Naive thymus-derived CD4-positive, alpha-beta T cell (primary cell): ENCODE measurements at regions of chr11 and their contacts with region 1.

Region 1: DNA sequence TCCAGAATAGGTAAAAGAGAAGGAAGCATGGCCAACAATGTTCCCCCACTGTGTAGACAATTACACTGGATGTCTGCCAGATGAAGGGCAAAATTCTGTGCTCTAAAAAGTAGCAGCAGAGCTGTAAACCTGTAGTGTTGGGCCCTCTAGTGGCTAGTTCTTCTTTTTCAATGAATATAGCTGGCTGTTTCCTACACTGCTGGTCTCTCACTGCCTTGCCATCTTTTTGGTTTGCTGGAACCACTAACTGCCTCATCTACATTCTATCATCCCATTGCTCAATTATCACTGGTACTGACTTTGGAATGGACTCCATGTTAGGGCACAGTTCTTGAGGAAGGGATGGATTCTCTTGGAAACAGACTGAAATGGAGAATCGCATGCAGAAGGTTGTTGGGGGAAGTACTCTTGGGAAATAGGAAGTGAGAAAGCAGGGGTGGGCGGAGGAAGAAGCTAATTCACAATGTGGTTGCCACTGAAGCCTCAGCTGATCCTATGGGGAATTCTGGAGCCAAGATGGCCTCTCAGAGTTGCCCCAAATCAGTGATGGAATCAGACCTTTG is 17.9 kb downstream of the KCNE3 start:
- DNase-seq: peak in 7 of 9 donors; percentile 56 to 77 (median 67)
- ATAC-seq: peak; percentile 92
- H3K4me3 ChIP-seq: no peak overlapping the region
- H3K4me3 Mint-ChIP-seq: no peak overlapping the region
- H3K27ac ChIP-seq: no peak overlapping the region
- H3K27ac Mint-ChIP-seq: peak overlapping the region in 1 of 9 donors; percentile 56
- H3K4me1 ChIP-seq: no peaks in the 10 kb centered on the region
- H3K4me1 Mint-ChIP-seq: peaks cover 0 to 6% (median 5%) of the 10 kb centered on the region in 7 donors
- H3K27me3 ChIP-seq: no peaks in the 10 kb centered on the region
- H3K27me3 Mint-ChIP-seq: peaks cover 0 to 10% (median 7%) of the 10 kb centered on the region in 5 donors

Region 2: GRCh38 chr11:74255741-74256369 is 193.6 kb before region 1 on chr11:
- CTCF ChIA-PET with region 1: interaction called, 30 read pairs
- POLR2A ChIA-PET with region 1: no interaction called
- intact Hi-C with region 1: loop called in 1 of 2 experiments (anchors 1 kb)
- DNase-seq: peak in 8 of 9 donors; percentile 21 to 72 (median 62)
- ATAC-seq: peak; percentile 90
- H3K4me3 ChIP-seq: no peak overlapping the region
- H3K4me3 Mint-ChIP-seq: no peak overlapping the region
- H3K27ac ChIP-seq: no peak overlapping the region
- H3K27ac Mint-ChIP-seq: peak overlapping the region in 5 of 9 donors; percentile 4 to 68 (median 12)
- H3K4me1 ChIP-seq: peaks cover 0 to 6% of the 10 kb centered on the region in 2 donors
- H3K4me1 Mint-ChIP-seq: peaks cover 0 to 12% (median 5%) of the 10 kb centered on the region in 7 donors
- H3K27me3 ChIP-seq: no peaks in the 10 kb centered on the region
- H3K27me3 Mint-ChIP-seq: no peaks in the 10 kb centered on the region

Region 3: DNA sequence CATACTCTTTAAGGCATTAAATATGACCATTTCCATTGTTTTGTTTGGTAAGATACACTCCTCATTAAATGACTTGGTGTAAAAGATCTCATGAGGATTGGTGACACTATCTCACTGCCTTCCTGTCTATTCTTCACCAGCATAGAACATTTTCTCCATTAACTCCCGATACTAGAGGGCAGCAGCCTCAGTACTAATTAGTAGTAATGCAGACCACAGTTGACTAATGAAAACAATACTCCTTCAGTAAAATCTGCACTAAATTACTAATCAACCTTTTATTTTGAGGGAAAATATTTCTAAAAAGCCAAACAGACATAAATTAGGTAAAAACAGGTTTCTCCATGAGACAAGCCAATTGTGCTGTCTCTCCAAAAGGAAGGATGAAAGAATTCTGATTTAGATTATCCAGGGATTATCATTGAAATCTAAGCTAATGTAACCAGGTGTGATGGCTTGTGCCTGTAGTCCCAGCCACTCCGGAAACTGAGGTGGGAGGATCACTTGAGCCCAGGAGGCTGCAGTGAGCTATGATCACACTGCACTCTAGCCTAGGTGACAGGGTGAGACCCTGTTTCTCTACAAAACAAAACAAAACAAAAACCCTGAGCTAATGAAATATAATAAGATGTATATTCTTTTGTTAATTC is 60.6 kb before region 1 on chr11:
- CTCF ChIA-PET with region 1: interaction called, 159 read pairs
- POLR2A ChIA-PET with region 1: interaction called, 5 read pairs
- intact Hi-C with region 1: loop called (anchors 1 kb)
- DNase-seq: peak in 8 of 9 donors; percentile 34 to 74 (median 64)
- ATAC-seq: peak; percentile 93
- H3K4me3 ChIP-seq: no peak overlapping the region
- H3K4me3 Mint-ChIP-seq: no peak overlapping the region
- H3K27ac ChIP-seq: no peak overlapping the region
- H3K27ac Mint-ChIP-seq: peak overlapping the region in 3 of 9 donors; percentile 10 to 82 (median 79)
- H3K4me1 ChIP-seq: peaks cover 0 to 3% of the 10 kb centered on the region in 2 donors
- H3K4me1 Mint-ChIP-seq: peaks cover 19 to 39% (median 33%) of the 10 kb centered on the region in 7 donors
- H3K27me3 ChIP-seq: no peaks in the 10 kb centered on the region
- H3K27me3 Mint-ChIP-seq: no peaks in the 10 kb centered on the region

Region 4: DNA sequence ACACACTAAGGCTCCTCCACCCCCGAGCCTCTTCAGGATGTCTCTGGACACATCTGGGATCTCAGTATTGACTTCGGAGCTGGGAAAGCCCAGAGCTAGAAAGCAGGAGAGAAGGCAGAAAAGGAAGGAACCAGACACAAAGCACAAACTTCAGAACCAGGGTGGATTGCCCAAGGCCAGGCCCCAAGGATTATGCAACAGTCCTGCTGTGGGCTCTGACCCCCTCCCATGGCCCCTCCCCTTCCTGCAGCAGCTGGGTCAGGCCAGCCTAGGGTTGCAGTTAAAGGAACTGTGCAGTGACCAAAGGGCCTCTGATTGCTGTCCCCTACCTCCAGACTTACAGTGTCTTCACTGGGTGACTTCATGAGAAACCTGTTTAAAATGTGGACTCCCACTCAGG is 12.6 kb after region 1 on chr11:
- CTCF ChIA-PET with region 1: interaction called, 15 read pairs
- POLR2A ChIA-PET with region 1: no interaction called
- intact Hi-C with region 1: no loop called
- DNase-seq: no peak
- ATAC-seq: peak; percentile 81
- H3K4me3 ChIP-seq: no peak overlapping the region
- H3K4me3 Mint-ChIP-seq: no peak overlapping the region
- H3K27ac ChIP-seq: no peak overlapping the region
- H3K27ac Mint-ChIP-seq: no peak overlapping the region
- H3K4me1 ChIP-seq: no peaks in the 10 kb centered on the region
- H3K4me1 Mint-ChIP-seq: peaks cover 0 to 10% (median 7%) of the 10 kb centered on the region in 7 donors
- H3K27me3 ChIP-seq: peaks cover 0 to 6% of the 10 kb centered on the region in 2 donors
- H3K27me3 Mint-ChIP-seq: peaks cover 25 to 30% (median 28%) of the 10 kb centered on the region in 5 donors

Region 5: DNA sequence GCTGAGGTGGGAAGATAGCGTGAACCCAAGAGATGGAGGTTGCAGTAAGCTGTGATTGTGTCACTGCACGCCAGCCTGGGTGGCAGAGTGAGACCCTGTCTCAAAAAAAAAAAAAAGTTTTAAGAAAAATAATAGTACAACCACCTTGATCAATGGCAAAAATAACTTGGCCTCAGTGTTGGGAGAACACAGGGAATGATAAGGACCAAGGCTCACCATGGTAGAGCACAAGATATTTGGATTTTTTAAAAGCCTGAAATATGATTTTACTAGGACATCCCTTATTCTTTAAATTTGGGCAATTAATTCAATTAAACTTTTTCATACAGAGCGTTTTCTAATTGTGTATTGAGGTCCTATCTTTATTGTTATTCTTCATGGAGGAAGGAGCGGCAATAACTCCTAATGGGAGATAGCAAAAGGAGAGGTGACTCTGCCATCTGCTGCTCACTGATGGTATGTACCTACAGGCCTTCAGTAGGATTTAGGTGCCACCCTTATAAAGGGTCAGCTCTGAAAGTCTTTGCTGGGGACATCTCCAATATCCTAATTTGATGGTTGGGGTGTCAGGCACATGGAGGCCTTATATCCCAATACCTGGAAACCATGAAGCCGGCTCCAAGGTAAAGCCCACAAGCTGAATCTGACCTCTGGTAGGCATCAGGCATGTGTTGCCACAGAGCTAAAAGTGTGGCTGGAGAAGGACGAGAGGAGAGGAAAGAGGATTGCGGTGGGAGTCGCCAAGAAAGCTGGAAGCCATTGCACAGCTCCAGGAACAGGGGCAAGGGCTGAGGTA is 121.0 kb after region 1 on chr11:
- CTCF ChIA-PET with region 1: interaction called, 63 read pairs
- POLR2A ChIA-PET with region 1: no interaction called
- intact Hi-C with region 1: loop called (anchors 1 kb)
- DNase-seq: peak in 3 of 9 donors; percentile 13 to 16 (median 15)
- ATAC-seq: peak; percentile 65
- H3K4me3 ChIP-seq: no peak overlapping the region
- H3K4me3 Mint-ChIP-seq: no peak overlapping the region
- H3K27ac ChIP-seq: no peak overlapping the region
- H3K27ac Mint-ChIP-seq: no peak overlapping the region
- H3K4me1 ChIP-seq: no peaks in the 10 kb centered on the region
- H3K4me1 Mint-ChIP-seq: no peaks in the 10 kb centered on the region
- H3K27me3 ChIP-seq: no peaks in the 10 kb centered on the region
- H3K27me3 Mint-ChIP-seq: peaks cover 0 to 14% (median 0%) of the 10 kb centered on the region in 5 donors

Region 6: GRCh38 chr11:74581954-74582547 is 132.6 kb after region 1 on chr11:
- CTCF ChIA-PET with region 1: no interaction called
- POLR2A ChIA-PET with region 1: no interaction called
- intact Hi-C with region 1: no loop called
- DNase-seq: no peak
- ATAC-seq: no peak
- H3K4me3 ChIP-seq: no peak overlapping the region
- H3K4me3 Mint-ChIP-seq: no peak overlapping the region
- H3K27ac ChIP-seq: no peak overlapping the region
- H3K27ac Mint-ChIP-seq: no peak overlapping the region
- H3K4me1 ChIP-seq: no peaks in the 10 kb centered on the region
- H3K4me1 Mint-ChIP-seq: peaks cover 0 to 3% (median 0%) of the 10 kb centered on the region in 7 donors
- H3K27me3 ChIP-seq: no peaks in the 10 kb centered on the region
- H3K27me3 Mint-ChIP-seq: peaks cover 0 to 2% (median 0%) of the 10 kb centered on the region in 5 donors

Region 7: GRCh38 chr11:74739546-74740270 is 290.3 kb after region 1 on chr11:
- CTCF ChIA-PET with region 1: no interaction called
- POLR2A ChIA-PET with region 1: no interaction called
- intact Hi-C with region 1: loop called in 1 of 2 experiments (anchors 10 kb)
- DNase-seq: peak in 5 of 9 donors; percentile 21 to 46 (median 41)
- ATAC-seq: peak; percentile 88
- H3K4me3 ChIP-seq: no peak overlapping the region
- H3K4me3 Mint-ChIP-seq: no peak overlapping the region
- H3K27ac ChIP-seq: no peak overlapping the region
- H3K27ac Mint-ChIP-seq: no peak overlapping the region
- H3K4me1 ChIP-seq: no peaks in the 10 kb centered on the region
- H3K4me1 Mint-ChIP-seq: peaks cover 0 to 13% (median 3%) of the 10 kb centered on the region in 7 donors
- H3K27me3 ChIP-seq: no peaks in the 10 kb centered on the region
- H3K27me3 Mint-ChIP-seq: peaks cover 6 to 39% (median 23%) of the 10 kb centered on the region in 5 donors